ENCODE measurements at regions of chr4 and their contacts with region 1.

Region 1: GRCh38 chr4:67020443-67020807 is 524.9 kb downstream of the CENPC start:
- DNase-seq: no peak
- ATAC-seq: no peak
- H3K4me3 Mint-ChIP-seq: no peak overlapping the region
- H3K27ac Mint-ChIP-seq: no peak overlapping the region; the same call in 1 of the 2 replicates
- H3K4me1 Mint-ChIP-seq: peaks cover 28% of the 10 kb centered on the region
- H3K27me3 Mint-ChIP-seq: no peaks in the 10 kb centered on the region
- CTCF ChIP-seq: no peak

Region 2: GRCh38 chr4:67234296-67234695 is 213.9 kb after region 1 on chr4:
- CTCF ChIA-PET with region 1: no interaction called
- POLR2A ChIA-PET with region 1: interaction called, 10 read pairs
- DNase-seq: no peak
- ATAC-seq: no peak
- H3K4me3 Mint-ChIP-seq: no peak overlapping the region
- H3K27ac Mint-ChIP-seq: no peak overlapping the region; the same call in 1 of the 2 replicates
- H3K4me1 Mint-ChIP-seq: no peaks in the 10 kb centered on the region
- H3K27me3 Mint-ChIP-seq: no peaks in the 10 kb centered on the region
- CTCF ChIP-seq: no peak

Measured in WTC11 (cell line).